Head of caudate nucleus (tissue), 42 donors: ENCODE measurements at regions of chr20 and their contacts with region 1.

Region 1: DNA sequence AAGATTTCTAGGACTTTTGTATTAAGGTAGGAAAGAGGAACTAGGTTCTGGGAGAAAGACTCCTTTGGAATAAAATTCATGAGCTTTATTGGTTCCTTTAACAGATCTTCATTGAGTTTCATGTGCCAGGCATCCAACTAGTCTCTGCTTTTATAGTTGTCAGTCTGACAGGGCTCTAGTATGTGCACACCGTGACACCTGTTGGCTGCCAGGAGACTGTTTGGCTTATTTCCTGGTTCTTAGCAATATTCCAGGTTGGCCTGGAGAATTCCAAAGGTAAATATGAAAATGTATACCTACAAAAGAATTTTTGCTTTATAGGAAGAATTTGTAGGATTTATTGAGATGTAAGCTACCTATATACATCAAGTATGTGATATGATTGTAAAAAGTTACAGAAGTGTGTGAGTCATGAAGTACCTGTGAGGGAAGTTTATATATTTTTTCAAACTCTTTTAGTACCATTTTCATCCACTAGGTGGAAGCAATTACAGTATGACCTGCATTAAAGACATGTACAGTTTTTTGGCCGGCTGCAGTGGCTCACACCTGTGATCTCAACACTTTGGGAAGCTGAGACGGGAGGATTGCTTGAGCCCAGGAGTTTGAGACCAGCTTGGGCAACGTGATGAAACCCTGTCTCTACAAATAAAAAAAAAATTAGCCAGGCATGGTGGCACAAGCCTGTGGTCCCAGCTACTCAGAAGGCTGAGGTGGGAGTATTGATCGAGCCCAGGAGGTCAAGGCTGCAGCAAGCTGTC is 35.2 kb downstream of the NDUFAF5 start:
- DNase-seq: peak in 1 of 42 donors; percentile 8

Region 2: GRCh38 chr20:13510837-13511488 is 309.1 kb before region 1 on chr20:
- intact Hi-C with region 1: no loop called
- DNase-seq: no peak

Region 3: DNA sequence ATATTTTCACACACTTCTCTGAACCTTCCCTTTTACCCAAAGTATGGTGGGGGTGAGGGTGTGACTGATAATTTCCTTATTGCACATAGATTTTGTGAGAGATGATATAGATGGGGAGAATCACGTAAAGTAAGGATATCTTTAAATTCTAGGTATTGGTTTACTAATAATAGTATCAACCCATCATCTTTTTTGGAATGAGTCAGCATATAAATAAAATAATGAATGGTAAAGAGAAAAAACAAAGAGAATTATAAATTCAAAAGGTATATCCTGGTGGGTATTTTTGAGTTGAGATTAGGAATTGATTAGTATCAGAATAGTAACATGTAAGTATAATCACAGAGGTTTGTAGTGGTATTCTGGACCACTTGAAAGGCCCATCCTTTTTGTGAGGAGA is 231.4 kb after region 1 on chr20:
- intact Hi-C with region 1: loop called (anchors 5 kb)
- DNase-seq: no peak